T-cell (primary cell): ENCODE measurements at regions of chr21 and their contacts with region 1.

Region 1: GRCh38 chr21:35864039-35864438 is 196.3 kb downstream of the SETD4 start:
- DNase-seq: no peak
- ATAC-seq: no peak
- H3K4me3 ChIP-seq: no peak overlapping the region
- H3K4me3 Mint-ChIP-seq: no peak overlapping the region
- H3K27ac ChIP-seq: no peak overlapping the region
- H3K27ac Mint-ChIP-seq: no peak overlapping the region
- H3K4me1 ChIP-seq: no peaks in the 10 kb centered on the region
- H3K4me1 Mint-ChIP-seq: no peaks in the 10 kb centered on the region
- H3K27me3 ChIP-seq: peaks cover 0 to 8% of the 10 kb centered on the region in 2 experiments
- H3K27me3 Mint-ChIP-seq: peaks cover 6 to 18% of the 10 kb centered on the region in 2 donors

Region 2: DNA sequence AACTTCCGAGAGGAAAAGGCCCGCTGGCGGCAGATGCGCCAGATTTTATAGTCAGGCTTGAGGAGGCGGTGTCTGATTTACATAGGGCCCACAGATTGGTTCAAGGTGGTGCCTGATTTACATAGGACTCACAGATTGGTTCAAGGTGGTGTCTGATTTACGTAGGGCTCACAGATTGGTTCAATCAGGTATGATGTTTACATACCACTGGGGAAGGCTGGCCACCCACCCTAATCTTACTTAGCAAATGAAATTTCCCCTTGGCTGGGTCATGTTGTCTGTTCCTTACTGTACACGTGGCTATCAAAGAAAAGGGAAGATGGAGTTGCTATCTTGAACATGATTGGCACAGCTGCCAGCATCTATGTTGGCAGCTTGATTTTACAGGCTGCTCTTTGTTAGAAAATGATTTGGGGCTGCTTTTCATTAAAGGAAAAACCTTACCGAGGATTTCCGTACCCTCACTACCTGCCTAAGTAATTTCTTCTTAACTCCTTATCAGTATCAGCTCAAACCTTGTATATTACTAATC is 99.9 kb after region 1 on chr21:
- CTCF ChIA-PET with region 1: no interaction called
- POLR2A ChIA-PET with region 1: interaction called in 1 of 2 experiments, 13 read pairs
- DNase-seq: no peak
- ATAC-seq: no peak
- H3K4me3 ChIP-seq: no peak overlapping the region
- H3K4me3 Mint-ChIP-seq: no peak overlapping the region
- H3K27ac ChIP-seq: no peak overlapping the region
- H3K27ac Mint-ChIP-seq: no peak overlapping the region
- H3K4me1 ChIP-seq: no peaks in the 10 kb centered on the region
- H3K4me1 Mint-ChIP-seq: no peaks in the 10 kb centered on the region
- H3K27me3 ChIP-seq: peaks cover 0 to 7% of the 10 kb centered on the region in 2 experiments
- H3K27me3 Mint-ChIP-seq: peaks cover 16 to 32% of the 10 kb centered on the region in 2 donors

Region 3: GRCh38 chr21:36141513-36141925 is 277.5 kb after region 1 on chr21:
- CTCF ChIA-PET with region 1: no interaction called
- POLR2A ChIA-PET with region 1: no interaction called
- DNase-seq: peak; percentile 52 to 93 (median 80)
- ATAC-seq: peak; percentile 84 to 97 (median 89)
- H3K4me3 ChIP-seq: no peak overlapping the region
- H3K4me3 Mint-ChIP-seq: no peak overlapping the region
- H3K27ac ChIP-seq: peak overlapping the region; percentile 57
- H3K27ac Mint-ChIP-seq: peak overlapping the region; percentile 62 to 76
- H3K4me1 ChIP-seq: peaks cover 8 to 35% of the 10 kb centered on the region in 2 experiments
- H3K4me1 Mint-ChIP-seq: peaks cover 24 to 35% (median 25%) of the 10 kb centered on the region in 3 donors
- H3K27me3 ChIP-seq: no peaks in the 10 kb centered on the region
- H3K27me3 Mint-ChIP-seq: no peaks in the 10 kb centered on the region